Endothelial cell of umbilical vein (primary cell): ENCODE measurements at regions of chr22 and their contacts with region 1.

Region 1: DNA sequence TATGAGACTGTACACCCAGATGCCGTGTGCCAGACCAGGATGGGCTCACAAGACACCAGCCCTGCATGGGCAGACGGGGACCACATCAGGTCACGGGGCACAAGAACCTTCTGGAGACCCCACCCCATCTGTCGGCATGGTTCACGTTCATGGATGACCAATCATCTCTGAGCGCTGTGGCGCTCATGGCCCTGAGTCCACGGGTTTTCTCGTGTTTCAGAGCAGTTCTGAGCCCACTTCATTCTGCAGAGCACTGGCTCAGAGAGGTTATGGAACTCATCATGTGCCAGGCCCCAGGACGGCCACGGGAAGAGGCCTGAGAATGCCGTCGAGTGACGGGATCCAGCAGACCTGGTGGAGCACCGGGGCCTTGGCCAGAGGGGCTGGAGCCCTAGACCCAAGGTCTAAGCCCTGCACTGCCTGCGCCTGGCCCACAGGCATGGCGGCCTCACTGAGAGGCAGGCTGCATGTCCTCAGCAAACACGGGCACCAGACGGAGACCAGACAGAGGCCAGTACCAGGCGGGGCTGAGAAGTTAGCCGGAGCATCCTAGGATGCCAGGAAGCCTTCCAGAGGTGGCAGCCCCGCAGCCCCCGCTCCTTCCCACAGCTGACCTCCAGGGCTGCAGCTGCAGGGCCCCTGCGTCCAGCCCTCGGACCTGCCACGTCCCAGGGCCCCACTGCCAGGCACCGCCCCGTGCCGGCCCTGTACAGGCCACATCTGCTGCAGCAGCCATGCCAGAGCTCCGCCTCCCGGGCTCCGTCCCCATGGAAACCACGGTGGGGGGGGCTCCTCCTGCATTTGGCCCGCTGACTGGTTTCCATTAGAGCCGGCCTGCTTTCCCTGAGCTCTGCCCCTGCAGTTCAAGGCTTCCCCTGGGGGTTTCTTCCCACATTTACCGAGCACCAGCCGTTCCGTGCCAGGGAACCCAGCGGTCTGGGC is 62.7 kb upstream of the PPARA start:
- DNase-seq: peak; percentile 85
- H3K4me3 ChIP-seq: no peak overlapping the region
- H3K27ac ChIP-seq: peak overlapping the region; percentile 85
- H3K4me1 ChIP-seq: peaks cover 69% of the 10 kb centered on the region
- H3K27me3 ChIP-seq: no peaks in the 10 kb centered on the region
- CTCF ChIP-seq: no peak
- POLR2A ChIP-seq: no peak

Region 2: GRCh38 chr22:46108564-46109473 is 21.2 kb after region 1 on chr22:
- CTCF ChIA-PET with region 1: no interaction called
- POLR2A ChIA-PET with region 1: no interaction called
- dilution Hi-C with region 1: no loop called
- intact Hi-C with region 1: loop called (anchors 1 kb)
- DNase-seq: peak; percentile 20
- H3K4me3 ChIP-seq: no peak overlapping the region
- H3K27ac ChIP-seq: no peak overlapping the region
- H3K4me1 ChIP-seq: no peaks in the 10 kb centered on the region
- H3K27me3 ChIP-seq: no peaks in the 10 kb centered on the region
- CTCF ChIP-seq: no peak
- POLR2A ChIP-seq: peak; percentile 33

Region 3: DNA sequence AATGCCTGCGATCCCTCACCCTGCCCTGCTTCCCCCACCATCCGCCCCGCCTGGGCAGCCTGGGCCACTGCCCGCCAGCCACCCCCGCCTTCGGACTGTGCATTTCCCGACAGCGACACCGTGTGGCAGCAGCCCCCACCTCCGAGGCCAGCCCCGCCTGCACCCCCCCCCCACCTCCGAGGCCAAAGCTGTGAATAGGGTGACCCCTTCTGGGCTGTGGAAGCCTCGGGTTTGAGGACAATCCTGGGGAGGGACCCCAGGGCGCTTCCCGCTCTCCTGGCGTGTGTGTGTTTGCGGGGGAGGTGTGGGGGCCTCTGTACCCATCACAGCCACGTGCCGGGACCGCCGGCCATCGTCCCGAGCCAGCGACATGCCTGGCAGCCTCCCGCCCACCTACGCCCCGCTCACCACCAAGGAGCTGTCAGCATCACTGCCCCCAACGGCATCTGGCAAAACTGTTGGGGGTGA is 28.9 kb after region 1 on chr22:
- CTCF ChIA-PET with region 1: interaction called, 10 read pairs
- POLR2A ChIA-PET with region 1: no interaction called
- dilution Hi-C with region 1: no loop called
- intact Hi-C with region 1: no loop called
- DNase-seq: peak; percentile 85
- H3K4me3 ChIP-seq: no peak overlapping the region
- H3K27ac ChIP-seq: no peak overlapping the region
- H3K4me1 ChIP-seq: no peaks in the 10 kb centered on the region
- H3K27me3 ChIP-seq: no peaks in the 10 kb centered on the region
- CTCF ChIP-seq: peak; percentile 81 to 95
- POLR2A ChIP-seq: no peak

Region 4: GRCh38 chr22:46139895-46140350 is 52.3 kb after region 1 on chr22:
- CTCF ChIA-PET with region 1: no interaction called
- POLR2A ChIA-PET with region 1: no interaction called
- dilution Hi-C with region 1: no loop called
- intact Hi-C with region 1: no loop called
- DNase-seq: no peak
- H3K4me3 ChIP-seq: no peak overlapping the region
- H3K27ac ChIP-seq: no peak overlapping the region
- H3K4me1 ChIP-seq: no peaks in the 10 kb centered on the region
- H3K27me3 ChIP-seq: peaks cover 5% of the 10 kb centered on the region in 2 experiments
- CTCF ChIP-seq: no peak
- POLR2A ChIP-seq: no peak

Region 5: GRCh38 chr22:46150034-46150654 is 62.5 kb after region 1 on chr22 and contains the start of gene PPARA:
- CTCF ChIA-PET with region 1: no interaction called
- POLR2A ChIA-PET with region 1: no interaction called
- dilution Hi-C with region 1: no loop called
- intact Hi-C with region 1: no loop called
- DNase-seq: peak; percentile 40
- H3K4me3 ChIP-seq: peak within 1 kb of the TSS; percentile 46 to 92 (median 73)
- H3K27ac ChIP-seq: no peak within 1 kb of the TSS
- H3K4me1 ChIP-seq: peaks cover 11% of the 10 kb centered on the region
- H3K27me3 ChIP-seq: peaks cover 8 to 25% of the 10 kb centered on the region in 2 experiments
- CTCF ChIP-seq: no peak
- POLR2A ChIP-seq: no peak
- total RNA-seq, gene PPARA: 6.6 and 10.7 TPM in 2 replicates